H1 (cell line): ENCODE measurements at regions of chr10 and their contacts with region 1.

Region 1: DNA sequence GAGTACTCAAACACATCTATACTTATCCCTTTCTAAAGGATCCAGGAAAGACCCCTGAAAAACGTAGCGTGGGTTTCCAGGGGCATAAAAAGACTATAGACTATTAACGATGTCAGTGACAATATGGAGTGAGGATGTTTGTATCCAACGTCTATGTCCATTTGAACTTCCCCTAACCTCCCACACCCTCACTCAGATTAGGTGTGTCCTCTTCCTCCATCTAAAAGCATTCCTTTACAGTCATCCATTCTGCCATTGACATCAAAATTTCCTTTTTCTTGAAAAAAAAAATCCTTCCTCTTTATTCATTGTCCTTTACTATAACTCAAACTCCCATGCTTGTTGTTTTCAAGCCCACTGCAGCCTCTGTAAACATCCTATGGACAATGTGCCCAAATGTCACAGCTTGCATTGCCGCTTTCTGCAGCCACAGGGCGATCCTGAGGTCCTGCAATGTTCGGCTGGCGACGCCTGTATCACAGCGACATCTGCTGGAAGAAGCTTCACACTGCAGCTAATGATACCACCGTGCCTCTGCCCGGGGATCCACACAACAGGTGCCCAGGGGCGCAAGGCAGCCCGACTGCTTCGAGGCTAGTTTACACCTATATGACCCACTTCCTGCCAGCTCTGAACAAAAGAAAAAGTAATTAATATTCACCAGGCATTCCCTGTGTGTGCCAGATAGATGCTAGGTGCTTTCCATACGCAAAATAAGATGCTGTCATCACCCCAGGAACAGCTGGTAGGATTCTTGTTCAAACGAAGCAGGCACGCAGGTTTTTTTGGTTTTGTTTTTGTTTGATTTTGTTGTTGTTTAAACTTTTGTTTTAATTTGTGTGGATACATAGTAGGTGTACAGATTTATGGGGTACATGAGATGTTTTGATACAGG is 267.9 kb upstream of the GHITM start:
- DNase-seq: peak; percentile 39 to 86
- H3K4me3 ChIP-seq: no peak overlapping the region
- H3K27ac ChIP-seq: no peak overlapping the region
- H3K4me1 ChIP-seq: no peaks in the 10 kb centered on the region; a peak in 2 of 7 replicates
- H3K27me3 ChIP-seq: no peaks in the 10 kb centered on the region
- CTCF ChIP-seq: peak; percentile 94 to 99 (median 99)
- EP300 ChIP-seq: no peak
- POLR2A ChIP-seq: no peak
- RAD21 ChIP-seq: peak; percentile 100

Region 2: GRCh38 chr10:83310688-83311087 is 560.7 kb before region 1 on chr10:
- CTCF ChIA-PET with region 1: interaction called, 10 read pairs
- POLR2A ChIA-PET with region 1: no interaction called
- DNase-seq: no peak
- H3K4me3 ChIP-seq: no peak overlapping the region
- H3K27ac ChIP-seq: no peak overlapping the region
- H3K4me1 ChIP-seq: no peaks in the 10 kb centered on the region
- H3K27me3 ChIP-seq: no peaks in the 10 kb centered on the region
- CTCF ChIP-seq: peak in 1 of 3 experiments; percentile 15; a peak in 1 of 4 replicates
- EP300 ChIP-seq: no peak
- POLR2A ChIP-seq: no peak
- RAD21 ChIP-seq: peak in 1 of 2 experiments; percentile 7; a peak in 2 of 4 replicates

Region 3: DNA sequence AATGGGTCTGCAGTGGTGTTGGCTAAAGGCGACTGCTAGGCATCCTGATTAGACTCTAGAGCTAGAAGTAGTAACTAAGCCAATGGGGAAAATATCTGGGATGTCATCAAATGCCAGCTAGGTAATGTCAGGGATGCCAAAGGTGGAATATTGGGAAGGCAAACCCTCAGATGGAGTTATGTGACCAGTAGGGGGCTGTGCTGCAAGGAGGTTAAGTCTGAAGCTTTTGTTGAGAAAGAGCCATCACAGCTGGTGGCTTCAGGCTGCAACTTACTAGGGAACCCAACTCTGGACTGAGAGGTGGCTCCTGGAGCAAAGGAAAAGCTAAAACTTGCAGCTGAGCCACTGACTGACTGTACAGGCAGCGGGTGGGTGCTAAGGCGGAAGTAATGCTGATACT is 309.1 kb before region 1 on chr10:
- CTCF ChIA-PET with region 1: interaction called, 12 read pairs
- POLR2A ChIA-PET with region 1: no interaction called
- DNase-seq: no peak
- H3K4me3 ChIP-seq: no peak overlapping the region
- H3K27ac ChIP-seq: no peak overlapping the region
- H3K4me1 ChIP-seq: no peaks in the 10 kb centered on the region
- H3K27me3 ChIP-seq: no peaks in the 10 kb centered on the region
- CTCF ChIP-seq: peak in 2 of 3 experiments; percentile 37 to 59; a peak in 3 of 4 replicates
- EP300 ChIP-seq: no peak
- POLR2A ChIP-seq: no peak
- RAD21 ChIP-seq: peak; percentile 45 to 57

Region 4: DNA sequence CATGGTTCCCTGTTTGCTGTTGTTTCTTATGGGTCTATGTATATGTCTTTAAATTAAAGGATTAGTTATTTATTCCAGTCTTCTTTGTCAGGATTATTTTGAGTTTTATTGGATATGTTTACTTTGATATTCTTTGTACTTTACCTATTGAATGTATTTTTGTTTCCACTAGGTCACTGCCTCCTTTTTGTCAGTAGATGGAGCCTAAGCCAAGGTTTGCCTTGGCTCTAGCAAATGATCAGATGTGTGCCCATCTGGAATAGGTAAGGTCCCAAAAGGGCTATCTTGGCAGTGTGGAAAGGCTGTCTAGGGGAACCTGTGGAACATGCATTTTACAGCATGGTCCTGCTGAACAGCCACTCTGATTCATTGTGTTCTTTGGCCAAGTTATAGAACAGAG is 69.5 kb before region 1 on chr10:
- CTCF ChIA-PET with region 1: interaction called, 11 read pairs
- POLR2A ChIA-PET with region 1: no interaction called
- DNase-seq: no peak
- H3K4me3 ChIP-seq: no peak overlapping the region
- H3K27ac ChIP-seq: no peak overlapping the region
- H3K4me1 ChIP-seq: no peaks in the 10 kb centered on the region
- H3K27me3 ChIP-seq: no peaks in the 10 kb centered on the region
- CTCF ChIP-seq: peak in 2 of 3 experiments; percentile 37 to 40; a peak in 3 of 4 replicates
- EP300 ChIP-seq: no peak
- POLR2A ChIP-seq: no peak
- RAD21 ChIP-seq: peak; percentile 76 to 78

Region 5: DNA sequence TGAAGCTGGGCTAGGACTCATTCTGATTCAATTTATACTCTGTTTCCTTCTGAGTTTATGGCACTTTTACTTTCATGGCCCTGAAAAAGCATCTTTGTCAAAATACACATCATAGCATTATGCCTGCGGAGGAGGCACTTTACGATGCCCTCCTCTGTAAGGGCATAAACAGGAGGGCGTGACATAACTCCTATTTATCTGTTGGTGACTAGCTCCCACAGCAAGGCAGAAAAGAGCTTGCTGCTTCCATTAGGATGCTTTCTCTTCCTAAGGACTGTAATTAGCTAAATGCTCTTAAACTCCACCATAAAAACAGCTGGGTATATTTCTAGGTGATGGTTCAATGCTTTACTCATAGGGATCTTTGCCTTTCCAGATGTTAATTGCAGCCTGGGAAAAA is 47.3 kb before region 1 on chr10:
- CTCF ChIA-PET with region 1: interaction called, 12 read pairs
- POLR2A ChIA-PET with region 1: no interaction called
- DNase-seq: no peak
- H3K4me3 ChIP-seq: no peak overlapping the region
- H3K27ac ChIP-seq: no peak overlapping the region
- H3K4me1 ChIP-seq: no peaks in the 10 kb centered on the region
- H3K27me3 ChIP-seq: no peaks in the 10 kb centered on the region
- CTCF ChIP-seq: no peak
- EP300 ChIP-seq: no peak
- POLR2A ChIP-seq: no peak
- RAD21 ChIP-seq: no peak

Region 6: GRCh38 chr10:83849135-83849534 is 22.3 kb before region 1 on chr10:
- CTCF ChIA-PET with region 1: interaction called, 15 read pairs
- POLR2A ChIA-PET with region 1: no interaction called
- DNase-seq: no peak
- H3K4me3 ChIP-seq: no peak overlapping the region
- H3K27ac ChIP-seq: no peak overlapping the region
- H3K4me1 ChIP-seq: no peaks in the 10 kb centered on the region
- H3K27me3 ChIP-seq: no peaks in the 10 kb centered on the region
- CTCF ChIP-seq: no peak
- EP300 ChIP-seq: no peak
- POLR2A ChIP-seq: no peak
- RAD21 ChIP-seq: no peak

Region 7: DNA sequence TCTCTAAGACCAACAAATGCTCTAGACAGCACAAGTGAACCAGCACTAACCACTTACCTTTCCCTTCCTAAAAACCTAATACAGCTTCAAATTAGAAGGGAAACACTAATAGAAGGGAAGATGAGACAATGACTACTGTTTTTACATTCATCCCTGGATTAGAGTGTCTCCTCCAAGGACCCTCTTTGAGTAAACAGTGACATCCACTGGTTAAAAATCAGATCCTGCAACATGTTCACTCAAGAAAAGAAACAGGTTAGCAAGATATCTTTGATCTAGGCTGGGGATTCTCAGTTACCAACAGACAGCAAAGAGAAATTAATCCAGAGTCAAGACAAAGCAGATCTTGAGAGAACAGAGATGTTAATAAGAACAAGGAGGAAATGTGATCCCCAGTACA is 90.2 kb after region 1 on chr10:
- CTCF ChIA-PET with region 1: interaction called, 85 read pairs
- POLR2A ChIA-PET with region 1: interaction called, 5 read pairs
- DNase-seq: no peak
- H3K4me3 ChIP-seq: no peak overlapping the region
- H3K27ac ChIP-seq: no peak overlapping the region
- H3K4me1 ChIP-seq: peaks cover 2 to 10% (median 4%) of the 10 kb centered on the region in 4 experiments; a peak in 5 of 7 replicates
- H3K27me3 ChIP-seq: peaks cover 0 to 20% (median 8%) of the 10 kb centered on the region in 4 experiments; a peak in 6 of 7 replicates
- CTCF ChIP-seq: peak in 2 of 3 experiments; percentile 32 to 39; a peak in 2 of 4 replicates
- EP300 ChIP-seq: no peak
- POLR2A ChIP-seq: no peak
- RAD21 ChIP-seq: peak; percentile 81 to 82